ENCODE measurements at regions of chr16 and their contacts with region 1.

Region 1: DNA sequence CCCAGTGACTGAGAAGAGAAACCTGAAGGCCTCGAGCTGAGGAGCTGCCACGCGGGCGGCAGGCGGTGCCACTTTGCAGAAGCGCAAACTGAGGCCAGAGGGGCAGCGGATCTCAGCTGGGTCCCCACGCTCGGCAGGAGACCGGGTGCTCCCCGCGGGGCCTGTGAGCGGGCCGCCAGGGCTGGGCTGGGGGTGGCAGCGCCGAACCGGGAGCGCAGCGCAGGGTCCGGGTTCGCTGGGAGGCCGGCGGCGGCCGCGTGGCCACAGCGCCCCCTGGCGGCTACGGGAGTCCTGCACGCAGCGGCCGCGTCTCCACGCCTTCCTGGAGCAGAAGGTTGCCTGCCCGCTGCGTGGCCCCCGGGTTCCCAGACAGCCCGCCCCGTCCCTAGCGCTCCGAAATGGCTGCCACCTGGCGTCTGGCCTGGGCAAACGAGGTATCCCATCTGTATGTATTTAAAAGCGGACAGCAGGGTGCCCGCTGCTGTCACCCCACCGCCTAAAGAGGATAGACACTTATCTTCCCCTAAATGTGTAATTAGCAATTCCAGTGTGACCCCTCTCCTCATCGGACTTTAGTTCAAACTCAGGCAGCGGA is 96.1 kb upstream of the CDH5 start:
- DNase-seq: peak; percentile 75 to 92
- H3K4me3 ChIP-seq: peak overlapping the region; percentile 26
- H3K4me3 Mint-ChIP-seq: peak overlapping the region; percentile 65
- H3K27ac Mint-ChIP-seq: no peak overlapping the region
- H3K4me1 ChIP-seq: 0 out of 2 replicates have a peak, but pooled peaks cover 13% of the 10 kb centered on the region
- H3K4me1 Mint-ChIP-seq: peaks cover 14% of the 10 kb centered on the region
- H3K27me3 ChIP-seq: no peaks in the 10 kb centered on the region
- H3K27me3 Mint-ChIP-seq: no peaks in the 10 kb centered on the region
- CTCF ChIP-seq: peak; percentile 84 to 99

Region 2: DNA sequence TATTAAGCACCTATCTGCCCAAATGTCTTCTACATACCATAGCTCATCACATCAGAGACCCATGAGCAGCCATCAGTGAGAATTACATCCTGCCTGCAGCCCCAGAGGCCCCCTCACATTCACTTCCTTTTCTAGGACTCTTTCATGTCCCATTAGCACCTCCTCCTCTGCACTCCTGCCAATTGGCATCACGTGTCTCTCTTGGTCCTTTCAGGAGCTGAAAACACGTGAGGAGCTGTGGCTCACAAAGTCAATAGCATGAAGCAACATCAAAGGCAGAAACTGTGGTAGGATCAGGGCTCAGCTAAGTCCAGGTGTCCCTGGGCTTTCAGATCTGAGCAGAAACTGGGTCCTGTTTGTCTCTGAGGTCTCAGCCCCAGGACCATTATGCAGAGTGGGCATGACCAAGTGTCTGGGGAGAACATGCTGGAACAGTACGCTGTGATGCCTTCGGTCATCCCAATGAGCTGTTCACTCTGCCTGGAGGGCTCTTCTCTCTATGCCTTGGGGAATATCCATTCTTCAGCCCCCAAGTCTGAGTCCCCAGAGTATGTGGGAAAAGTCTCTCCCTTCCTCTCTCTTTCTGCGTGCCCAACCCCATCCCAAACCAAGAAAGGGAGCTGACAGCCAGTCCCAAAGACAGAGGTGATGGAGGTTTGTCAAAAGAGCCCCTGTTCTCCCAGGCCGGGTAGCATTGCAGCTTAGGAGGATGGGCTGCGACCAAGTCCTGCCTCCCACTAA is 360.9 kb before region 1 on chr16:
- CTCF ChIA-PET with region 1: no interaction called
- POLR2A ChIA-PET with region 1: no interaction called
- intact Hi-C with region 1: loop called (anchors 5 kb)
- DNase-seq: no peak
- H3K4me3 ChIP-seq: no peak overlapping the region
- H3K4me3 Mint-ChIP-seq: no peak overlapping the region
- H3K27ac Mint-ChIP-seq: no peak overlapping the region
- H3K4me1 ChIP-seq: no peaks in the 10 kb centered on the region
- H3K4me1 Mint-ChIP-seq: no peaks in the 10 kb centered on the region
- H3K27me3 ChIP-seq: no peaks in the 10 kb centered on the region
- H3K27me3 Mint-ChIP-seq: peaks cover 18% of the 10 kb centered on the region
- CTCF ChIP-seq: no peak

Region 3: GRCh38 chr16:65991149-65991701 is 279.2 kb before region 1 on chr16:
- CTCF ChIA-PET with region 1: no interaction called
- POLR2A ChIA-PET with region 1: no interaction called
- intact Hi-C with region 1: loop called (anchors 1 kb)
- DNase-seq: peak in 1 of 2 experiments; percentile 35
- H3K4me3 ChIP-seq: no peak overlapping the region
- H3K4me3 Mint-ChIP-seq: no peak overlapping the region
- H3K27ac Mint-ChIP-seq: no peak overlapping the region
- H3K4me1 ChIP-seq: no peaks in the 10 kb centered on the region
- H3K4me1 Mint-ChIP-seq: no peaks in the 10 kb centered on the region
- H3K27me3 ChIP-seq: no peaks in the 10 kb centered on the region
- H3K27me3 Mint-ChIP-seq: peaks cover 20% of the 10 kb centered on the region
- CTCF ChIP-seq: peak in 1 of 2 experiments; percentile 20

Measured in Caco-2 (cell line).